ENCODE measurements at regions of chr15 and their contacts with region 1.

Region 1: DNA sequence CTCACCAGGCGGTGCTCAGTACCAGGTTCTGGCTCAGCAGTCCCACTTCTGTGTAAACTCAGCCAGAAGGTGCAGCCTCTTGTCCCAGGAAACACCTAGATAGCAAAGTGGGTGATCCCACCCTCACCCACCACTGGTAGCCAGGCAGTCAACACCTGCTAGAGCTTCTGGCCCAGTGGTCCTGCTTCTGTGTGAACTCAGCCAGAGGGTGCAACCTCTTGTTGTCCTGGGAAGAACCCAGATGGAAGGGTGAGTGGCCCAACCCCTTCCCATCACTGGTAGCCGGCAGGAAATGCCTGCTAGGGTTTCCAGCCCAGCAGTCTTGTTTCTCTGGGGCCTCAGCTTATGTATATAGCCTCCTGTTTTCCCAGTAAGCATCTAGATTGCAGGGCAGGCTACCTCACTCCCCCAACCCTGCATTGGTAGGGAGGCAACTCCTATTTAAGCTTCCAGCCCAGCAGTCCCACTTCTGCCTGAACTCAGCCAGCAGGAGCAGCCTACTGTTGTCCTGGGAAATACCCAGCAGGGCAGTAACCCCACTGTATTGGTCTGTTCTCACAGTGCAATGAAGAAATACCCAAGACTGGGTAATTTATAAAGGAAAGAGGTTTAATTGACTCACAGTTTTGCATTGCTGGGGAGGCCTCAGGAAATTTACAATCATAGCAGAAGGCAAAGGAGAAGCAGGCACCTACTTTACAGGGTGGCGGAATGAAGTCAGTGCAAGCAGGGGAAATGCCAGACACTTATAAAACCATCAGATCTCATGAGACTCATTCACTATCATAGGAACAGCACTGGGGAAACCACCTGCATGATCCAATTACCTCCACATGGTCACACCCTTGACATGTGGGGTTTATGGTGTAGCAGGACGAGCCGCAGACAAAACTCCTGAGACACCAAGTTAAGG is 110.6 kb downstream of the DTWD1 start:
- DNase-seq: no peak

Region 2: GRCh38 chr15:49774689-49775088 is 43.2 kb after region 1 on chr15:
- intact Hi-C with region 1: loop called (anchors 5 kb)
- DNase-seq: no peak

Measured in cardiac septum (tissue), 1 donor.